ENCODE measurements at regions of chr10 and their contacts with region 1.

Region 1: DNA sequence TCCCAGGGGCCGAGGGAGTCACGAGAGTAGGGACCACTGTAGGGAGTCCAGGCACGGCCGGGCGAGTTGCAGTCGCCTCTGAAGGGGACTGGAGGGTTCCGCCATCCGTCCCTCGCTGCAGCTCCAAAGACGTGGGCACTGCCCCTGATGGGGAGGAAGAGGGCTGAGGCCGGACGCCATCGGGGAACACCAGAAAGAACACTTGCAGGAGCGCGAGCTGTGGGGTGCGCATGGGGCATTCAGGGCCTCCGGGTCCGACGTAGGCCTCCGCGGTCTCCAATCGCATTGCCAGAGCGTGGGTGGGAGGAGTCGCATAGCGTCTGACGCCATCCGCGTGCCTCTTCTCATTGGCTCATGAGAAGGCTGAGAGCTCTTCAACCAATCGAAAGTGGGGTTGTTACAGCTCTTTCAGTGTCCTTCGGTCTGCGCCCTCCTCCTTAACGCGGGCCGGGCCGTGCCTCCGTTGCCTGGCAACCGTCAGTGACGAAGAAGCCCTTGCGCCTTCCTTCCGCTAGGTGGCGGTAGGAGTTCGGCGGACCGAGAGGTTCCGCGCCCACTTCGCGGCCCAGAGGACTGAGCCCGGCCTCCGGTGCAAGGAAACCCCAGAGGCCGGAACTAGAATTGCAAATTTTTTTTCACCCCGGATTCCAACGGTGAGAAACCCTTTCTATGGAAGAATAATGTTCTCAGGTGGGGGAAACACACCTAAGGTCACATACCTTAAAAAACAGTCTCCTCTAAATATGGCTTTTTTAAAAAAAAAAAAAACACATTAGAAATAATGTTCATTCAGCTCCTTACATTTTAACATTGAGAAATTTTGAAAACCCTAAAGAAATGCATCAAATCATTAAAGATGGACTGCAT is at the start of gene TCTN3:
- DNase-seq: peak; percentile 100
- ATAC-seq: peak; percentile 99
- H3K4me3 ChIP-seq: peak within 1 kb of the TSS; percentile 64
- H3K27ac ChIP-seq: peak within 1 kb of the TSS; percentile 36
- H3K4me1 ChIP-seq: no peaks in the 10 kb centered on the region
- H3K27me3 ChIP-seq: no peaks in the 10 kb centered on the region
- CTCF ChIP-seq: peak; percentile 100; the same call in 1 of the 2 replicates
- POLR2A ChIP-seq: peak; percentile 72
- RAD21 ChIP-seq: peak; percentile 98
- total RNA-seq, gene TCTN3: 20.6 and 26.9 TPM in 2 replicates

Region 2: GRCh38 chr10:95656291-95657164 is 37.4 kb before region 1 on chr10 and contains the start of gene ALDH18A1:
- CTCF ChIA-PET with region 1: no interaction called
- POLR2A ChIA-PET with region 1: no interaction called
- dilution Hi-C with region 1: no loop called
- in situ Hi-C with region 1: no loop called
- intact Hi-C with region 1: loop called (anchors 1 kb)
- DNase-seq: peak; percentile 89
- ATAC-seq: peak; percentile 95
- H3K4me3 ChIP-seq: peak within 1 kb of the TSS; percentile 74
- H3K27ac ChIP-seq: peak within 1 kb of the TSS; percentile 68
- H3K4me1 ChIP-seq: 0 out of 2 replicates have a peak, but pooled peaks cover 2% of the 10 kb centered on the region
- H3K27me3 ChIP-seq: no peaks in the 10 kb centered on the region
- CTCF ChIP-seq: no peak
- POLR2A ChIP-seq: peak; percentile 58; the same call in 1 of the 2 replicates
- RAD21 ChIP-seq: no peak
- total RNA-seq, gene ALDH18A1: 201 and 232 TPM in 2 replicates

Region 3: DNA sequence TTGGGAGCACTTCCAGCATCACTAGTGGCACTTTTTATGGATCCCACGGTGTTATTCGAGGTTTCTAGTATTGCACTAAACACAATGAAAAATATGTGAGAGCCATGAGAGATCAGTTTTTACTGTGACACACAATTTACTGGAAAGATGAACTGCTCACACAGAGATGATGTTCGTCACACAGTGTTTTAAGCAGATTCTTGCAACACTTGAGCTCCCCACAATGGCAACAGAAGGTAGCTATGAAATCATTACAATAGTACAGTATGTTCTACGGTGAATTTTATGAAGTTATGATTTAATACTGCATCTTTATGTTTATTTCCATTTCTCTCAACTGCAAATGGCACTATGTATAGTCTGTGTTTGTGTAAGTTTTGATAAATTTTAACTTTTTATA is 34.6 kb after region 1 on chr10:
- CTCF ChIA-PET with region 1: interaction called, 18 read pairs
- POLR2A ChIA-PET with region 1: no interaction called
- dilution Hi-C with region 1: no loop called
- in situ Hi-C with region 1: no loop called
- intact Hi-C with region 1: loop called (anchors 2 kb)
- DNase-seq: peak; percentile 3
- ATAC-seq: peak; percentile 64
- H3K4me3 ChIP-seq: no peak overlapping the region
- H3K27ac ChIP-seq: no peak overlapping the region
- H3K4me1 ChIP-seq: no peaks in the 10 kb centered on the region
- H3K27me3 ChIP-seq: no peaks in the 10 kb centered on the region
- CTCF ChIP-seq: no peak
- POLR2A ChIP-seq: no peak
- RAD21 ChIP-seq: no peak

Region 4: GRCh38 chr10:95841661-95842498 is 148.0 kb after region 1 on chr10:
- CTCF ChIA-PET with region 1: interaction called, 174 read pairs
- POLR2A ChIA-PET with region 1: no interaction called
- dilution Hi-C with region 1: no loop called
- in situ Hi-C with region 1: loop called (anchors 5 kb)
- intact Hi-C with region 1: loop called (anchors 1 kb)
- DNase-seq: peak; percentile 66
- ATAC-seq: peak; percentile 91
- H3K4me3 ChIP-seq: no peak overlapping the region
- H3K27ac ChIP-seq: no peak overlapping the region
- H3K4me1 ChIP-seq: peaks cover 3% of the 10 kb centered on the region; the same call in 1 of the 2 replicates
- H3K27me3 ChIP-seq: no peaks in the 10 kb centered on the region
- CTCF ChIP-seq: peak; percentile 80
- POLR2A ChIP-seq: no peak
- RAD21 ChIP-seq: peak; percentile 73

Region 5: GRCh38 chr10:95907456-95908253 is 213.8 kb after region 1 on chr10 and contains the start of gene CC2D2B:
- CTCF ChIA-PET with region 1: interaction called, 7 read pairs
- POLR2A ChIA-PET with region 1: no interaction called
- dilution Hi-C with region 1: no loop called
- in situ Hi-C with region 1: no loop called
- intact Hi-C with region 1: loop called (anchors 1 kb)
- DNase-seq: peak; percentile 74
- ATAC-seq: peak; percentile 96
- H3K4me3 ChIP-seq: peak within 1 kb of the TSS; percentile 85
- H3K27ac ChIP-seq: peak within 1 kb of the TSS; percentile 79
- H3K4me1 ChIP-seq: no peaks in the 10 kb centered on the region
- H3K27me3 ChIP-seq: no peaks in the 10 kb centered on the region
- CTCF ChIP-seq: peak; percentile 23; the same call in 1 of the 2 replicates
- POLR2A ChIP-seq: no peak
- RAD21 ChIP-seq: no peak
- total RNA-seq, gene CC2D2B: not detected in 2 replicates

Region 6: GRCh38 chr10:96153070-96153469 is 459.2 kb after region 1 on chr10:
- CTCF ChIA-PET with region 1: no interaction called
- POLR2A ChIA-PET with region 1: no interaction called
- dilution Hi-C with region 1: no loop called
- in situ Hi-C with region 1: no loop called
- intact Hi-C with region 1: no loop called
- DNase-seq: peak; percentile 2
- ATAC-seq: no peak
- H3K4me3 ChIP-seq: no peak overlapping the region
- H3K27ac ChIP-seq: no peak overlapping the region
- H3K4me1 ChIP-seq: no peaks in the 10 kb centered on the region
- H3K27me3 ChIP-seq: no peaks in the 10 kb centered on the region
- CTCF ChIP-seq: no peak
- POLR2A ChIP-seq: no peak
- RAD21 ChIP-seq: no peak